A549 (cell line): ENCODE measurements at regions of chr15 and their contacts with region 1.

Region 1: DNA sequence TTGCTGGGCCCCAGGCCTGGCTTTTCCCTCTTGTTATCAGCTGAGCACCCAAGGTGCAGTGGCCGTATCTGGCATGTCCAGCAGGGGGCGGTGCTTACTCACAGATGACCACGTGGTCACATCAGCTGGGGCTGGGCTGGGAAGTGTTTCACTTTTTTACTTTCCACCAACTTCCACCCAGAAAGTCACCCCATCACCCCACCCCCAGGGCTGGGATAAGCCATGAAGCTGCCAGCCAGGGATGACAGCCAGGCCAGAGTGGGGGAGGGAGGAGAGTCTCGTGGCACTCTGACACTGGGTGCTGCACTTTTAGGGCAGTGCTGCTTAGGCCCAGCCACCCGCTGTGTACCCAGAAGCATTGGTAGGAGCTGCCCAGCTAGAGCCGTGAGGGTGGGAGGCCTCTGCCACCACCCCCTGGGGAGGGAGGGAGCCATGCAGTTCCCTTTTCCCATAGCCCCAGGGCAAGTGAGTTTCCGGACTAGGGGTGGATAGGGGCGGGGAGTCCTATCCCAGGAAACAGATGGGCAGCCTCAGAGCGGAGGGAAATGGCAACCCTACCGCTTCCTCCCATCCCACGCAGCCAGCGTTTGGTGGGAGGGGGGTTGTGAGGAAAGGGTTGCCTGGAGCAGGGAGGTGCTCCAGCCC is 6.1 kb downstream of the PPCDC start:
- DNase-seq: peak; percentile 87 to 94
- ATAC-seq: peak; percentile 92 to 96
- H3K4me3 ChIP-seq: no peak overlapping the region
- H3K27ac ChIP-seq: peak overlapping the region; percentile 70 to 82
- H3K4me1 ChIP-seq: peaks cover 25% of the 10 kb centered on the region
- CTCF ChIP-seq: peak; percentile 98
- EP300 ChIP-seq: no peak
- POLR2A ChIP-seq: no peak
- RAD21 ChIP-seq: peak; percentile 98 to 99

Region 2: DNA sequence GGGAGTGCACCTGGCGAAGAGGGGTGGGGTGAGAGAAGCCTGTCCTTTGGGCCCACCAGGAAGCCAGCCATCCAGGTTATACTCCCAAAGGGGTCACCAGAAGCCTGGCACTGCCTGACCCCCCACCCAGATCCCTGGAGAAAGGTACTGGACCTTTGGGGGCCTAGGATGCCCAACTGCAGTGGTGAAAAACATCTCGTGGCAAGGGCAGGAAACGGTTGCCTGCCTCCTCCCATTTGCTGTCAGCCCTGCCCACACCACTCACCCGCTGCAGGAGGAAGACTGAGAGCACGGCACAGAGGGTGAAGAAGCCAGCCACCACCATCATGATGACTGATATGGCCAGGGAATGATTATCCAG is 184.3 kb before region 1 on chr15:
- CTCF ChIA-PET with region 1: no interaction called
- POLR2A ChIA-PET with region 1: no interaction called
- DNase-seq: no peak
- ATAC-seq: no peak
- H3K4me3 ChIP-seq: no peak overlapping the region
- H3K27ac ChIP-seq: no peak overlapping the region
- H3K4me1 ChIP-seq: peaks cover 13% of the 10 kb centered on the region
- CTCF ChIP-seq: no peak
- EP300 ChIP-seq: no peak
- POLR2A ChIP-seq: no peak
- RAD21 ChIP-seq: no peak

Region 3: GRCh38 chr15:75149867-75150709 is 120.6 kb after region 1 on chr15:
- CTCF ChIA-PET with region 1: interaction called, 13 read pairs
- POLR2A ChIA-PET with region 1: no interaction called
- DNase-seq: peak in 1 of 2 experiments; percentile 79
- ATAC-seq: peak in 1 of 2 experiments; percentile 63; a peak in 3 of 6 replicates
- H3K4me3 ChIP-seq: no peak overlapping the region
- H3K27ac ChIP-seq: peak overlapping the region; percentile 30 to 40; a peak in 3 of 6 replicates
- H3K4me1 ChIP-seq: peaks cover 24% of the 10 kb centered on the region
- CTCF ChIP-seq: no peak
- EP300 ChIP-seq: no peak
- POLR2A ChIP-seq: no peak
- RAD21 ChIP-seq: no peak

Region 4: DNA sequence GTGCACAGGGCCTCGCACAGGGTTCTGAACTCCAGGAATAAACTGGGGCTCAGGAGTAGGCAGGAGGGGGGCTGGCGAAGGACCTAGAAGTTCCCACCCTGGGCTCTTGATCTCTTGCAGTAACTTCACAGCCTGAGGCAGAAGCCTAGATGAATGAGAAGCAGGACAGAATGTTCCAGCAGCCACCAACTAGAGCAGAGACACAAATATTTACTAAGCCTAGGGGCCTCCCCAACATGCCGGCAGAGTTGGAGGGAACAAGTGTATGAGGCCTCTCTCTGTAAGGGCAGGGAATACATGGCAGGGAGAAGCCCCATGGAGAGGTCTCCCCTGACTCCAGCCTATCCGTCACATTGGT is 146.9 kb after region 1 on chr15:
- CTCF ChIA-PET with region 1: interaction called, 12 read pairs
- POLR2A ChIA-PET with region 1: no interaction called
- DNase-seq: no peak
- ATAC-seq: peak in 1 of 2 experiments; percentile 13; a peak in 2 of 6 replicates
- H3K4me3 ChIP-seq: no peak overlapping the region
- H3K27ac ChIP-seq: peak overlapping the region; percentile 76 to 79
- H3K4me1 ChIP-seq: peaks cover 42% of the 10 kb centered on the region
- CTCF ChIP-seq: no peak
- EP300 ChIP-seq: no peak
- POLR2A ChIP-seq: no peak
- RAD21 ChIP-seq: no peak

Region 5: DNA sequence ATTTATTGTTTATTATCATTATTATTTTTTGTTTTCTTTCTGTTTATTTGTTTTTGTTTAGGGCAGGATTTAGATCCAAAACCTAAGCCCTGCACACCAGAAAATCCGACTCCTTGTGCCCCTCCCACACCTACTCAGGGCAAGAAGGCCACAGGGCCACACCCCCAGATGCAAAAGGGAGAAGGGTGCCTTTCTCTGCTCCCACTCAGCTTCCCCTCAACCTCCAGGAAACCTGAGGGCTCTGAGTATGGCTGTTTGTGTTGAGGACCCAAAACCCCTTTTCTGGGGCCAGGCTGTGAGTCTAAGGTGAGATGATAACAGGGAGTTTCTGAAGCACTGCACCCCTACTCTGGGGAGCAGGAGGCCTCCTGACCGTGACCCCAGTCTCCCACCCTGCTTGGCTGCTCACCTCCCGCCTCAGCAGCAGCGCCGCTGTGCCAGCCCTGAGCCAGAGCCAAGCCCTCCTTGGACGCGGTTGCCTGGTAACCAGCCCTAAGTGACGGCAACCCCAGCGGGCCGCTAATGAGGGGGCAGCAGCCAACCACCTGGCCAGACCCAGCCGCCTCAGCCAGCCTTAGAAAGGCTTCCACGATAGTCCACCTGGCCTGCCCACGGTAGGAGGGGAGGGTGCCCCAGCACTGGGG is 165.7 kb after region 1 on chr15:
- CTCF ChIA-PET with region 1: interaction called, 88 read pairs
- POLR2A ChIA-PET with region 1: no interaction called
- DNase-seq: no peak
- ATAC-seq: no peak
- H3K4me3 ChIP-seq: no peak overlapping the region
- H3K27ac ChIP-seq: no peak overlapping the region
- H3K4me1 ChIP-seq: no peaks in the 10 kb centered on the region
- CTCF ChIP-seq: no peak
- EP300 ChIP-seq: no peak
- POLR2A ChIP-seq: no peak
- RAD21 ChIP-seq: no peak

Region 6: DNA sequence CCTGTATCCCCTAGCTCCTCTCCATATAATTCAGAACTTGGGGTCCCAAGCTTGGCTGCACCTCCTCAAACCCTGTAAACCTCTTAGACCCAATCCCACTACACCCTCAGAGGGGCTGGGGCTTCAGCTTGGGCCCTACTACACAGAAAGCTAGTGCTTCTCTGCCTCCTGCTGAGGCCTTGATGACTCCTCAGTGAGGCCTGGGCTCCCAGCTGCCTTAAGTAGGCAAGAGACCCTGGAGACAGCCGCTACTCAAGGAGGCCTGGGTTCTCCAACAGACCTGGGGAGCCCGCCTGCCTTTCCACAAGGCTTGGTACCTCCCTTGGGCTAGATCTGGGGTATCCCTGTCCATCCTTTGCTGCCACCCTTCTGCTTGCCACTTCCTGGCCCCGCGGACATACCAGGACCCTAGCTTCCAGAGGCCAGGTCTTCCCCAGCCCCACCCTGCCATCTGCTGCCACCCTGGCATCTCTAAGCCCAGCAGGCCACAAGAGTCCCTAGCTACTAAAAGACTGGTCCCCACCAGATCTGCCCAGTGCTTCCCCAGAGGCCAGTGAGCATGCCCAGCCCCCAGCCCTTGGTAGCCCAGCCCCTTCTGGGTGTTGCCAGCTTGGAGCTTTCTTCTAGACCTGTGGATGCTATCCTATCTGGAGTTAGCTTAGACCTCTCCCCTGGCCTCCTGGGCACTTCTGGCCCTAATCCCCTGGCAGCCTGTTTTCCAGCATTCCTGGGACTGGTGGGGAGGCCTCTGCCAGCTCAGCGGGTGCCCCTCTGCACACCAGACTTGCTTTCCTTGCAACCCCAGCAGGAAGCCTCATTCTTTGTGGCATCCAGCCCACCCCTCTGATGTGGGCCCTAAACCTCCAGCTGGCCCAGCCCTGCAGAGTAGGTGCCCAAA is 185.9 kb after region 1 on chr15:
- CTCF ChIA-PET with region 1: interaction called, 324 read pairs
- POLR2A ChIA-PET with region 1: no interaction called
- DNase-seq: no peak
- ATAC-seq: peak; percentile 22 to 48; a peak in 4 of 6 replicates
- H3K4me3 ChIP-seq: no peak overlapping the region
- H3K27ac ChIP-seq: no peak overlapping the region
- H3K4me1 ChIP-seq: no peaks in the 10 kb centered on the region
- CTCF ChIP-seq: no peak
- EP300 ChIP-seq: no peak
- POLR2A ChIP-seq: no peak
- RAD21 ChIP-seq: no peak

Region 7: GRCh38 chr15:75302318-75302717 is 272.8 kb after region 1 on chr15:
- CTCF ChIA-PET with region 1: interaction called, 52 read pairs
- POLR2A ChIA-PET with region 1: no interaction called
- DNase-seq: no peak
- ATAC-seq: no peak
- H3K4me3 ChIP-seq: no peak overlapping the region
- H3K27ac ChIP-seq: no peak overlapping the region
- H3K4me1 ChIP-seq: no peaks in the 10 kb centered on the region
- CTCF ChIP-seq: no peak
- EP300 ChIP-seq: no peak
- POLR2A ChIP-seq: no peak
- RAD21 ChIP-seq: no peak